Panc1 (cell line): ENCODE measurements at regions of chr5 and their contacts with region 1.

Region 1: DNA sequence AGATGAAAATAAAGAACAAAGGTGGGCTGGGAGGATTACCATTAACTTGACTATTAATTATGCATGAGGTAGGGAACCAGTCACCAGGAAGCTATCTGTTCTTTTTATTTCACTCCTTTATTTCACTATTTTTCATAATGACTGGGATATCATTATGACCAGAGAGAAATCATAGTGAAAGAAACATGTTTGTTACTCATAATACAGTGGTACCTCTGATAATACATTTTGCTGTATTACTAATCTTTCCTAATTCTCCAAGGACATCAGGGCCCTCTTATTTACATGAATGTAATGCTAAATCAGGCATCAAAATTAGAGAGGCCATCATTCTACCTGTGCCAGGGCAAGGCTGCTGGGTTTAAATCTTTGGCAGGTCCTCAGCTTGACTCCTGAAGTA is 253.7 kb downstream of the NR3C1 start:
- DNase-seq: no peak
- ATAC-seq: no peak
- H3K4me3 ChIP-seq: no peak overlapping the region
- H3K27ac ChIP-seq: no peak overlapping the region
- H3K4me1 ChIP-seq: no peaks in the 10 kb centered on the region
- H3K27me3 ChIP-seq: no peaks in the 10 kb centered on the region
- CTCF ChIP-seq: no peak

Region 2: DNA sequence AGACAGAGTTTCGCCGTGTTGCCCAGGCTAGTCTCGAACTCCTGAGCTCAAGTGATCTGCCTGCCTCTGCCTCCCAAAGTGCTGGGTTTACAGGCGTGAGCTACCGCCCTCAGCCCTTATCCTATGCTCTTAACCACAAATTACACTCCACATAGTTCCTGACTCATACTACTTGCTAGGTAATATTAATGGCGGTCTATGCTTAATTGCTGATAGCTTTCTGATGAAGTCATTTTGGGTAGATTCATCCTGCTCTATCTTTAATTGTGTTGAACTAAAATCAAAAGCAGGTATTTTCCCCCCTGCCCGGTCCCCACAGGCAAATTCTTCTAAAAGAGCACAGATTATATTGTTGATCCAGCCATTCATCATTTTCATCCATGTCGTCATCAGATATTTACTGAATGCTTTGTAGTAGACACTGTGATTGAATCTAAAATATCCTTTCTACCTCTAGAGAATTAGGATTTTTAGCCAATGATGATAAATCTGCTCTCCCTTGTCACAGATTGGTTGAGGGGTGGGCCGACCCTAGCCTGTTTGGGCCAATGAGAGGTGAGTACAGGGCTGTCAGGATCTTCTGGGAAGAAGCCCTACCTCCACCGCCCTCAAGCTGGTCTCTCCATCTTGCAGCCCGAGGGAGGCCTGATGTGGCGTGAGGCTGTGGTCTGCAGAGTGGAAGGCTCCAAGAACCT is 108.9 kb after region 1 on chr5:
- CTCF ChIA-PET with region 1: no interaction called
- POLR2A ChIA-PET with region 1: interaction called, 12 read pairs
- in situ Hi-C with region 1: no loop called
- intact Hi-C with region 1: no loop called
- DNase-seq: no peak
- ATAC-seq: peak; percentile 48; the same call in 1 of the 2 replicates
- H3K4me3 ChIP-seq: no peak overlapping the region
- H3K27ac ChIP-seq: no peak overlapping the region
- H3K4me1 ChIP-seq: 0 out of 2 replicates have a peak, but pooled peaks cover 3% of the 10 kb centered on the region
- H3K27me3 ChIP-seq: no peaks in the 10 kb centered on the region
- CTCF ChIP-seq: no peak